Uterus (tissue), 4 donors: ENCODE measurements at regions of chr1 and their contacts with region 1.

Region 1: DNA sequence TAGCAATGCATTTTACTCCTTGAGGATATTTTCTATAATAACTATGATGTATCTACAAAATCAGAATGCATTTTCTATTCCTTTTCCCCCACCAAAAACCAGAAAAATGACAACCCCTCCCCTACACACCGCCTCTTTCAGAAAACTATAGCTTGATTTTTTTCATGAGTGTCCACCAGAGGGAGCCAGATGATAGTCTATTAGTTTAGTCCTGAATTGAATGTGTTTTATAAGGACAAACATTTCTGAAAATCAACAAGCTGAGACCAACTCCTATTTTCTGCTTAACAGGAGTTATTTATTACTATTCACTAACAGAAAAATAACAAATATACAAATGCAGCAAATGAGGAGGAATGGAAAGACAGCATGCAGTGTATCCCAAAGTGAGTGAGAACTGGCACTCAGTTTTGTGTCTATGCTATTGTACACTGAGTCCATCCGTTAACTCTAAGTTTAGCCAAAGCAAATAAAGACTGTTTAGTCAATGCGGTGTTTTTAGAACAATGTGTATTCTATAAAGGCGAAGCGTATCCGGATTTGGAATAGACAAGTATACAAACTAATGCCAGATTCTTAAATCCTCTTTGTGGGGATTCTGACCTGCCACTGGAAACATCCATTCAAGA is 182.6 kb downstream of the VAV3 start:
- DNase-seq: no peak
- H3K4me3 ChIP-seq: no peak overlapping the region
- H3K27ac ChIP-seq: no peak overlapping the region
- H3K4me1 ChIP-seq: no peaks in the 10 kb centered on the region
- H3K27me3 ChIP-seq: no peaks in the 10 kb centered on the region
- CTCF ChIP-seq: peak; percentile 48 to 70 (median 57)
- POLR2A ChIP-seq: no peak

Region 2: GRCh38 chr1:107357376-107357775 is 425.0 kb before region 1 on chr1:
- intact Hi-C with region 1: no loop called
- DNase-seq: no peak
- H3K4me3 ChIP-seq: no peak overlapping the region
- H3K27ac ChIP-seq: no peak overlapping the region
- H3K4me1 ChIP-seq: no peaks in the 10 kb centered on the region
- H3K27me3 ChIP-seq: no peaks in the 10 kb centered on the region
- CTCF ChIP-seq: no peak
- POLR2A ChIP-seq: no peak

Region 3: GRCh38 chr1:107535091-107535490 is 247.2 kb before region 1 on chr1:
- intact Hi-C with region 1: no loop called
- DNase-seq: no peak
- H3K4me3 ChIP-seq: no peak overlapping the region
- H3K27ac ChIP-seq: no peak overlapping the region
- H3K4me1 ChIP-seq: no peaks in the 10 kb centered on the region
- H3K27me3 ChIP-seq: no peaks in the 10 kb centered on the region
- CTCF ChIP-seq: no peak
- POLR2A ChIP-seq: no peak

Region 4: DNA sequence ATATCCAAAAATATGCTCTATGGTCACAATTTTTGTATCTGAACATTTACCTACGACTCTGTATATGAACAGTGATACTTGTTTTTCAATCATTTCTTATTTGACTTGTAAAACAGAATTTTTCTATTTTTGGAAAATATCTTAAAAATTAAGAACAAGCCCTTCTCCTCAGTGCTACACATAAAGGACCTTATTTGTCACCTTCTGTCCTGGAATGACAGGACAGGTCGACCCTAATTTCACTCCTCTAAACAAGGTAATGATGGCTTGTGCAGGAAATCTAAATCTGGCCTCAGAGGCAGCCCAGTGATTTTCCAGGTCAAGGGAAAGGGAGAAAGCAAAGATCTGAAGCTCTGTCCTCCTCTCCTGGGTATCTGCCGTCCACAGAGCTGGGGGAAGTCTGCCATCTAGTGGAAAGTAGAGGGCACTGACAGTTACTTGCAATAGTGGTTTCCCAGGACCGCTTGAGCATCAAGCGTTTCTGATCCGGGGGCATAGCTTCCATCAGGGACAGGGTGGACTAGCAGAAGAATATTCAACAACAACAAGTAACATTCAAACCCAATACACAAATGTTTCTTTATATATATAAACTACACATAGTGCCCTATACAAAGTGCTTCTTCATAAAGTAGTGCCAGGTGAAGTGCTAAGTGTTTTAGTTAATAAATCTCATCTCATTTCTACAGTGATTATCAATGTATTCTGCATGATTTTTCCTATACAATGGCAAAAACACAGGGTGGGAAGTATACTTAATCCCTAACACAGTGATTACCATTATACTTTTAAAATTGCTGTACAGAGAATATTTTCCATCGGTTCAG is 343.2 kb after region 1 on chr1:
- intact Hi-C with region 1: loop called (anchors 10 kb)
- DNase-seq: peak; percentile 30 to 45
- H3K4me3 ChIP-seq: no peak overlapping the region
- H3K27ac ChIP-seq: no peak overlapping the region
- H3K4me1 ChIP-seq: no peaks in the 10 kb centered on the region
- H3K27me3 ChIP-seq: no peaks in the 10 kb centered on the region
- CTCF ChIP-seq: peak; percentile 72 to 90 (median 84)
- POLR2A ChIP-seq: no peak